ENCODE measurements at regions of chr7 and their contacts with region 1.

Region 1: GRCh38 chr7:138886501-138886917 is 88.5 kb upstream of the ATP6V0A4 start:
- DNase-seq: peak; percentile 36
- H3K4me3 Mint-ChIP-seq: no peak overlapping the region
- H3K27ac Mint-ChIP-seq: peak overlapping the region; percentile 48
- H3K4me1 Mint-ChIP-seq: peaks cover 30% of the 10 kb centered on the region
- H3K27me3 Mint-ChIP-seq: no peaks in the 10 kb centered on the region

Region 2: DNA sequence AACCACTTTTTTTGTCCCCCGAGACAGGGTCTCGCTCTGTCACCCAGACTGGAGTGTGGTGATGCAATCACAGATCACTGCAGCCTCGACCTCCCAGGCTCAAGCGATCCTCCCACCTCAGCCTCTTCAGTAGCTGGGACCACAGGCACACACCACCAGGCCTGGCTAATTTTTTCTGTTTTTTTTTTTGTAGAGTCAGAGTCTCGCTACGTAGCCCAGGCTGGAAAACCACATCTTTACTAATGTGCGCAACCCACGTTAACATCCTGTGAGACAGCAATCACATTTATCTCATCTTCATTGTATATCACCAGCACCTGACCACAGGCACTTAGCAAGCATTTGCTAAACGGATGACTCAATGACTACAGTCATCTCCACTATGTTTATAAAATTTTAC is 10.7 kb before region 1 on chr7:
- CTCF ChIA-PET with region 1: interaction called, 52 read pairs
- POLR2A ChIA-PET with region 1: interaction called, 6 read pairs
- DNase-seq: peak; percentile 79
- H3K4me3 Mint-ChIP-seq: no peak overlapping the region
- H3K27ac Mint-ChIP-seq: peak overlapping the region; percentile 85
- H3K4me1 Mint-ChIP-seq: peaks cover 30% of the 10 kb centered on the region
- H3K27me3 Mint-ChIP-seq: no peaks in the 10 kb centered on the region

Region 3: DNA sequence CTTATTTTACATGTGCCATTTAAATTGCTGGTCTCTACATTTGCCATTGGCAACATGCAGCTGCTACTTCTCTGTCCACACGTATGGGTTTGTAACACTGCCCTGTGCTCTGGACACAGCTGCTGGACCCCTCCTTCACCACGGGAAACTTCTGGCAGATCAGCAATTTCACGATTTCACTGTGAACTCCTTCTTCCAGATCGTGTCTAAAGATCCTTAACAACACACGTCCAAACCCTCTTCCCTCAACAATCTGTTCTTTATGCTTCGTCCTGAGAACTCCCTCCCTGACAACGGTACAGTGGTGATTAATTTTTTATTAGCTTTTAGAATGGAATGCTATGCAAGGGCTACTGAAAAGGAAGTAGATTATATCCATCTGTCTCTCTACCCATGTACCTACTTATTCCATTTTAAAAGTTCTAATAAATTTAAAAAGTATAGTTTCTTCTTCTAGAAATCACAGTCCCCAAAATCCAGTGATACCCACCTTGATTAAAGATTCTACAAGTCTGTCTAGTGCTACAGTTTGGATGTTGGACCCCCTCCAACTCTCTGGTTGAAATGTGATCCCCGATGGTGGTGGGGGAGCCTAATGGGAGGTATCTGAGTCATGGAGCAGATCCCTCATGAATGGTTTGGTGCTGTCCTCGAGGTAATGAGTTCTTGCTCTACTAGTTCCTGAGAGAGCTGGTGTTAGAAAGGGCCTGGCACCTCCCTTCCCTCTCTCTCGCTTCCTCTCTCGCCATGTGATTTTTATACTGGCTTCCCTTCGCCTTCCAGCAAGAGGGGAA is 13.7 kb after region 1 on chr7:
- CTCF ChIA-PET with region 1: interaction called, 40 read pairs
- POLR2A ChIA-PET with region 1: interaction called, 7 read pairs
- DNase-seq: no peak
- H3K4me3 Mint-ChIP-seq: no peak overlapping the region
- H3K27ac Mint-ChIP-seq: no peak overlapping the region
- H3K4me1 Mint-ChIP-seq: peaks cover 59% of the 10 kb centered on the region
- H3K27me3 Mint-ChIP-seq: peaks cover 42% of the 10 kb centered on the region

Region 4: GRCh38 chr7:138981332-138982203 is 95.1 kb after region 1 on chr7 and contains the start of gene KIAA1549:
- CTCF ChIA-PET with region 1: interaction called, 40 read pairs
- POLR2A ChIA-PET with region 1: interaction called, 5 read pairs
- DNase-seq: peak; percentile 69
- H3K4me3 Mint-ChIP-seq: peak within 1 kb of the TSS; percentile 77
- H3K27ac Mint-ChIP-seq: no peak within 1 kb of the TSS
- H3K4me1 Mint-ChIP-seq: peaks cover 14% of the 10 kb centered on the region
- H3K27me3 Mint-ChIP-seq: peaks cover 48% of the 10 kb centered on the region
- total RNA-seq, gene KIAA1549: 0.33 to 0.40 TPM

Region 5: DNA sequence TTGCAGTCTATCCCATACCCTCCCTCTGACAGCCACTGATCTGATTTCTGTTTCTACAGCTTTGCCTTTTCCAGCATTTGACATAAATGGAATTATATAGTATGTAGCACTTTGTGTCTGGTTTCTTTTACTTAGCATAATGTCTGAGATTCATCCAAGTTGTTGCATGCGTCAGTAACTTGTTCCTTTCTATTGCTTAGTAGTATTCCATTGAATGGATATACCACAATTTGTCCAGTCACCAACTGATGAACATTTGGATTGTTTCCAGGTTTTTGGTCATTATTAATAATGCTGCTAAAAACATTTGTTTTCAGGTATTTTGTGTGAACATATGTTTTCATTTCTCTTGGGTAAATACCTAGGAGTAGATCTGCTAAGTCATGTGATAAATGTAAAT is 101.2 kb after region 1 on chr7:
- CTCF ChIA-PET with region 1: interaction called, 12 read pairs
- POLR2A ChIA-PET with region 1: interaction called, 5 read pairs
- DNase-seq: no peak
- H3K4me3 Mint-ChIP-seq: no peak overlapping the region
- H3K27ac Mint-ChIP-seq: no peak overlapping the region
- H3K4me1 Mint-ChIP-seq: no peaks in the 10 kb centered on the region
- H3K27me3 Mint-ChIP-seq: peaks cover 46% of the 10 kb centered on the region

Region 6: GRCh38 chr7:139016931-139017511 is 130.5 kb after region 1 on chr7:
- CTCF ChIA-PET with region 1: interaction called, 17 read pairs
- POLR2A ChIA-PET with region 1: no interaction called
- DNase-seq: peak; percentile 74
- H3K4me3 Mint-ChIP-seq: no peak overlapping the region
- H3K27ac Mint-ChIP-seq: no peak overlapping the region
- H3K4me1 Mint-ChIP-seq: peaks cover 12% of the 10 kb centered on the region
- H3K27me3 Mint-ChIP-seq: peaks cover 21% of the 10 kb centered on the region

Region 7: DNA sequence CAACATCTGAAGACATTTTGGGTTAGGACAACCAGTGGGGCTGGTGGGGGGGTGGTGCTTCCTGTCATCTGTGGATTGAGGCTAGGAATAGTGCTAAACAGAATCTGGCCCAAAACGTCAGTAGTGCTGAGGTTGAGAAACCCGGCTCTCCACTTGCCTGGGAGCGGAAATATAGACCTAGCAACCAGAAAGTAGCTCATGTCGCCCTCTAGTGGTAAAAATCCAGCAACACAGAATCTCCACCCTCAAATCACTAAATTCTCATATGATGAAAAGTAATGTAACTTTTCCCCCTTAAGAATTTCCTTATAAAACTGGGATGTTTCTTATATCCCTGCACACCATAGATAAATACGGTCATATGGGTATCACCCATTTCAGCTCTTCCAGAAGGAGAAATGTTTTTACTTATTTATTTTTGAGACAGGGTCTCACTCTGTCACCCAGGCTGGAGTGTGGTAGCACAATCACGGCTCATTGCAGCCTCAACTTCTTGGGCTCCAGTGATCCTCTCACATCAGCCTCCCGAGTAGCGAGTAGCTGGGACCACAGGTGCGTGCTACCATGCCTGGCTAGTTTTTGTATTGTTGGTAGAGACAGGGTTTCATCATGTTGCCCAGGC is 188.6 kb after region 1 on chr7:
- CTCF ChIA-PET with region 1: interaction called, 11 read pairs
- POLR2A ChIA-PET with region 1: interaction called, 9 read pairs
- DNase-seq: peak; percentile 73
- H3K4me3 Mint-ChIP-seq: peak overlapping the region; percentile 36
- H3K27ac Mint-ChIP-seq: peak overlapping the region; percentile 58
- H3K4me1 Mint-ChIP-seq: peaks cover 74% of the 10 kb centered on the region
- H3K27me3 Mint-ChIP-seq: no peaks in the 10 kb centered on the region

Measured in activated CD4-positive, alpha-beta memory T cell treated with anti-CD3 and anti-CD28 coated beads, Interleukin-2, amount 10 ng/mL, durations not matched to agents 7 days and 5 days (primary cell).